Activated CD4-positive, alpha-beta memory T cell treated with anti-CD3 and anti-CD28 coated beads for 36 hours (primary cell): ENCODE measurements at regions of chr4 and their contacts with region 1.

Region 1: GRCh38 chr4:68249434-68249833 is 3.9 kb upstream of the TMPRSS11B start:
- DNase-seq: no peak
- H3K4me3 Mint-ChIP-seq: no peak overlapping the region
- H3K27ac Mint-ChIP-seq: peak overlapping the region; percentile 88
- H3K4me1 Mint-ChIP-seq: peaks cover 17% of the 10 kb centered on the region
- H3K27me3 Mint-ChIP-seq: peaks cover 3% of the 10 kb centered on the region

Region 2: GRCh38 chr4:67581208-67581857 is 668.1 kb before region 1 on chr4:
- CTCF ChIA-PET with region 1: no interaction called
- POLR2A ChIA-PET with region 1: no interaction called
- intact Hi-C with region 1: loop called (anchors 1 kb)
- DNase-seq: no peak
- H3K4me3 Mint-ChIP-seq: peak overlapping the region; percentile 48
- H3K27ac Mint-ChIP-seq: peak overlapping the region; percentile 59
- H3K4me1 Mint-ChIP-seq: peaks cover 20% of the 10 kb centered on the region
- H3K27me3 Mint-ChIP-seq: no peaks in the 10 kb centered on the region

Region 3: GRCh38 chr4:67684839-67685531 is 564.4 kb before region 1 on chr4:
- CTCF ChIA-PET with region 1: no interaction called
- POLR2A ChIA-PET with region 1: no interaction called
- intact Hi-C with region 1: loop called (anchors 1 kb)
- DNase-seq: no peak
- H3K4me3 Mint-ChIP-seq: peak overlapping the region; percentile 14
- H3K27ac Mint-ChIP-seq: peak overlapping the region; percentile 81
- H3K4me1 Mint-ChIP-seq: peaks cover 32% of the 10 kb centered on the region
- H3K27me3 Mint-ChIP-seq: no peaks in the 10 kb centered on the region

Region 4: DNA sequence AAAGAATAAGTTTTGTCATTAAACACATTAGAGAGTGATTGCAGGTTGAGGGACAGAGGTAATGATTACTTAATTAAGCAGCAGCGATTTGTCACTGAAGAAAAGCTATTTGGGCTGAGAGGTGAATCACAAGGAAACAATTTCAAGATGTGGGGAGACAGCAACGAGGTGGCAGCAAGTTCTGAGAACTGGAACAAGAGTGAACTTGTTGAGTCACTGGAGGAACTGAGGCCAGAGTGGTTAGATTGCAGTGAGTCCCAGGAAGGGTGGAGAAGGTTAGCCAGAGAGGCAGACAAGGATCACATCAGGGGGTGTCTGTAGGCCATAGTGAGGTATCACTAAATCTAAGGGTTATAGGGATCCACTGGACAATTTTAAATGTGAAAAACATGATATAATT is 228.2 kb before region 1 on chr4:
- CTCF ChIA-PET with region 1: no interaction called
- POLR2A ChIA-PET with region 1: no interaction called
- intact Hi-C with region 1: no loop called
- DNase-seq: no peak
- H3K4me3 Mint-ChIP-seq: no peak overlapping the region
- H3K27ac Mint-ChIP-seq: no peak overlapping the region
- H3K4me1 Mint-ChIP-seq: no peaks in the 10 kb centered on the region
- H3K27me3 Mint-ChIP-seq: no peaks in the 10 kb centered on the region

Region 5: GRCh38 chr4:68271851-68272756 is 22.7 kb after region 1 on chr4:
- CTCF ChIA-PET with region 1: interaction called, 4 read pairs
- POLR2A ChIA-PET with region 1: no interaction called
- intact Hi-C with region 1: loop called (anchors 2 kb)
- DNase-seq: no peak
- H3K4me3 Mint-ChIP-seq: peak overlapping the region; percentile 36
- H3K27ac Mint-ChIP-seq: no peak overlapping the region
- H3K4me1 Mint-ChIP-seq: peaks cover 7% of the 10 kb centered on the region
- H3K27me3 Mint-ChIP-seq: peaks cover 1% of the 10 kb centered on the region